Right ventricle myocardium inferior (tissue), 1 donor: ENCODE measurements at regions of chr9 and their contacts with region 1.

Region 1: GRCh38 chr9:125374443-125375309 is 113.0 kb downstream of the GAPVD1 start:
- DNase-seq: no peak
- ATAC-seq: peak; percentile 74

Region 2: GRCh38 chr9:124861342-124862229 is 513.1 kb before region 1 on chr9 and contains the starts of genes ARPC5L and RPL35:
- intact Hi-C with region 1: loop called (anchors 10 kb)
- DNase-seq: peak; percentile 97
- ATAC-seq: peak; percentile 97
- total RNA-seq, gene ARPC5L: 41.8 TPM
- total RNA-seq, gene RPL35: 752 TPM

Region 3: GRCh38 chr9:125189361-125190289 is 185.1 kb before region 1 on chr9 and contains the start of gene PPP6C:
- intact Hi-C with region 1: no loop called
- DNase-seq: peak; percentile 98
- ATAC-seq: peak; percentile 99
- total RNA-seq, gene PPP6C: 39.4 TPM

Region 4: DNA sequence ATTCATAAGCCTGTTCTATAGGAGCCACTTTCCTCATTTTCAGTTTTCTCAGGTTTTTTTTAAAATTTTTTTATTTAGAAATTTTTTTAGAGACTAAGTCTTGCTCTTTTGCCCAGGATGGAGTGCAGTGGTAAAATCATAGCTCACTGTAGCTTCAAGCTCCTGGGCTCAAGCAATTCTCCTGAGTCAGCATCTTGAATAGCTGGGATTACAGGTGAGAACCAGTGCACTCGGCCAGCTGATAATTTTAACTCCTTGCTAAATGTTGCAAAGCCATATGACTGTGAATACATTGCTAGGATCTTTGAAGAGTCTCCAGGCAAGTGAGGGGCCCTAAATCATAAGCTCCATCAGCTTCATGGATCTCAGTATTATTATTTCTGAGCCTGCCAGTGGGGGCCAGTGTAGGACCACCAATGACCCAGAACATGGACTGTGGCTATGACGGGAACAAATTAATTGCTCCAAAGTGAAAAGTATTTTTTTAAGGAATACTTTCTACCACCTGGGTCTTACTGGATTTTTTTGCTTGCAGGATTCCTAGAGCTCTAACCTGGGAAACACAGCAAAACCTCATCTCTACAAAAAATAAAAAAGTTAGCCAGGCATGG is 118.8 kb before region 1 on chr9:
- intact Hi-C with region 1: loop called (anchors 5 kb)
- DNase-seq: no peak
- ATAC-seq: no peak